Gastrocnemius medialis (tissue), 4 donors: ENCODE measurements at regions of chr9 and their contacts with region 1.

Region 1: DNA sequence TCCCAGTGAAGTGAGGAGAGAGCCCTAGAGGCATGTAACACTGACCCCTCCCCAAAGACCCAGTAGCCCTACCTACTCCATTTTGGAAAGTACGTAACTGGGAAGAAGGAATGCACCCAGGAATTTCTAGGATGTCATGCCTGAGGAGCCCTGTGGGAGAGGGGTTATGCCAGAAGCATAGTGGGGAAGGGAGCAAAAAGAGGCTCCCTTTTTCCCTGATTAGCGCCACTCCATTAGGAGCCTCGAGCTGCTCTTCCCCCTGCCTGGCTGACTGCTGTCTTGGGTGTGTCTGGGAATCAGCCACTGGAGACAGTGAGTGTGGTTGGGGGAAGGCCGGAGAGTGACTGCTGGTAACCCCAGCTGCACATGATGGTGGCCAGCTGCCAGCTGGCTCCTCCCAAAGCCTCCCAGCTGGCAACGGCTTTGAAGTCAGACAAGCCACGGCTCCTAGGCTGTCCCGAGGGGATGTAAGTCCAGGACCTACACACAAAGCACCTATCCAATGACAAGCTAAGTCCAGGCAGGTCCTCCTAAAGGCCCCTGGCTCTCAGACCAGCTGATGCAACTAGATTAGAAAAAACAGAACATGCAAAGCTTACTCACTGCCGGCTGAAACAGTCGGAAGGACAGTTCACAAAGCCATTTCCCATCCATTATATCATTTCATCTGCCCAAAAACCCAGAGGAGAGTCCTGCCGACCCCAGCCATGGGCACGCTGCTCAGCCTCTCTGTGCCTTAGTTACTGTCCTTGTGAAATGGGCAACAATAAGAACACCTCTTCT is 136.6 kb upstream of the ABCA1 start:
- DNase-seq: peak; percentile 94 to 98
- ATAC-seq: peak; percentile 95
- H3K4me3 ChIP-seq: peak overlapping the region in 3 of 4 donors; percentile 17 to 33 (median 17)
- H3K27ac ChIP-seq: peak overlapping the region; percentile 84 to 92 (median 87)
- H3K4me1 ChIP-seq: peaks cover 21 to 24% of the 10 kb centered on the region in 2 donors
- H3K27me3 ChIP-seq: no peaks in the 10 kb centered on the region
- CTCF ChIP-seq: peak in 2 of 5 experiments; percentile 14 to 22
- POLR2A ChIP-seq: peak; percentile 47 to 74

Region 2: GRCh38 chr9:104863180-104863883 is 201.2 kb before region 1 on chr9:
- in situ Hi-C with region 1: loop called in 1 of 4 experiments (anchors 10 kb)
- intact Hi-C with region 1: loop called (anchors 2 kb)
- DNase-seq: peak in 1 of 2 donors; percentile 57
- ATAC-seq: peak; percentile 73 to 79
- H3K4me3 ChIP-seq: no peak overlapping the region
- H3K27ac ChIP-seq: peak overlapping the region; percentile 46 to 90 (median 62)
- H3K4me1 ChIP-seq: peaks cover 24 to 35% of the 10 kb centered on the region in 2 donors
- H3K27me3 ChIP-seq: no peaks in the 10 kb centered on the region
- CTCF ChIP-seq: peak; percentile 56 to 78 (median 74)
- POLR2A ChIP-seq: no peak

Region 3: GRCh38 chr9:104968025-104968982 is 96.2 kb before region 1 on chr9:
- in situ Hi-C with region 1: no loop called
- intact Hi-C with region 1: loop called (anchors 2 kb)
- DNase-seq: peak; percentile 77 to 94
- ATAC-seq: peak; percentile 91 to 93
- H3K4me3 ChIP-seq: peak overlapping the region; percentile 80 to 97 (median 82)
- H3K27ac ChIP-seq: peak overlapping the region; percentile 94 to 99 (median 96)
- H3K4me1 ChIP-seq: peaks cover 21 to 25% of the 10 kb centered on the region in 2 donors
- H3K27me3 ChIP-seq: no peaks in the 10 kb centered on the region
- CTCF ChIP-seq: peak in 1 of 5 experiments; percentile 25
- POLR2A ChIP-seq: peak in 1 of 2 donors; percentile 54

Region 4: DNA sequence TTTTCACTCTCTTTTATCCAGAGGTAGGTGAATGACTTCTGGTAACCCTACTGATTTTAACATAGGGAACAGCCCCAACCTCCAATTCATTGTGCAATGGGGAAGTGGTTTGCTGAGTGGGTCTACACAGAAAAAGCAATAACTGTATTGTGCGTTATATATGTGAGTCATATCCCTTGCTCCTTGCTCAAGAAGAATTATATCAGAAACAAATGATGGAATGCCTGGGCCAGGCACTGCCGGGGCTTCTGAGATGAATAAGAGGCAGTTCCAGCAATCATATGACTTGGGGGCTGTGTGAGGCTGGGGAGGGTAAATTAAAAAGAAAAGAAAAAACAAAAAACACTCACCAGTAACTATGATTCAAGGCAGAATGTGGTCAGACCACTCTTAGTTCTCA is 57.4 kb before region 1 on chr9:
- in situ Hi-C with region 1: no loop called
- intact Hi-C with region 1: no loop called
- DNase-seq: no peak
- ATAC-seq: peak in 1 of 2 donors; percentile 49
- H3K4me3 ChIP-seq: no peak overlapping the region
- H3K27ac ChIP-seq: no peak overlapping the region
- H3K4me1 ChIP-seq: no peaks in the 10 kb centered on the region
- H3K27me3 ChIP-seq: no peaks in the 10 kb centered on the region
- CTCF ChIP-seq: no peak
- POLR2A ChIP-seq: no peak

Region 5: DNA sequence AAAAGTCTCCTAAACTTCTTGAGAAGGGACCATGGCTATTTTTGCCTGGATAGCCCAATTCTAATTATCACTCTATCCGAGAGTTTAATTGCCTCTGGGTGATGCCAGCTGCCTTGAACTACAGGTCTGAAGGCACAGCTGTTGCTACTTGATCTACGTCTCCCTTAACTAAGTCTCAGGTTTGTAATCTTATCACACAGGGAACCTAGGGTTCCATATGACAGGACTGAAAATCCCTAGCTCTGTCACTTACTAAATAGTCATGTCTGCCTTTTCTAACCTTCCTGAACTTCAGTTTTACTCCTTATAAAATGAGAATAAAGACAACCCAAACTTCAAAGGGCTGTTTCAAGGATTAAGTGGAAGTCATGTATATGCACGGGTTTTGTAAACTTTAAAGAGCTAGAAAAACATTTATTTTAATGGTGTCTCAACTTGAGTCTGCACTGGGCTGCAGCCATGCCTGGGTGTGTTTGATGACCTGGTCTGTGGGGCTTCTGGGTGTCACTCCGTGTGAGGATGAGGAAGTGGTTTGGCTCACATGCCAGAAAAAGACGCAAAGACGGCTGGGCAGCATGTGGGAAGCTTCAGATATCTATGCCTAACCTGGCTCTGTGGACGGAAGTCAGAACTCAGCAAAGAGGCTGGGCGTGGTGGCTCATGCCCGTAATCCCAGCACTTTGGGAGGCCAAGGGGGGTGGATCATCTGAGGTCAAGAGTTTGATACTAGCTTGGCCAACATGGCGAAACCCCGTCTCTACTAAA is 50.6 kb after region 1 on chr9:
- in situ Hi-C with region 1: no loop called
- intact Hi-C with region 1: loop called (anchors 1 kb)
- DNase-seq: peak; percentile 30 to 58
- ATAC-seq: peak; percentile 22 to 51
- H3K4me3 ChIP-seq: no peak overlapping the region
- H3K27ac ChIP-seq: peak overlapping the region; percentile 73 to 82 (median 80)
- H3K4me1 ChIP-seq: peaks cover 19 to 36% of the 10 kb centered on the region in 2 donors
- H3K27me3 ChIP-seq: no peaks in the 10 kb centered on the region
- CTCF ChIP-seq: no peak
- POLR2A ChIP-seq: peak in 1 of 2 donors; percentile 51

Region 6: DNA sequence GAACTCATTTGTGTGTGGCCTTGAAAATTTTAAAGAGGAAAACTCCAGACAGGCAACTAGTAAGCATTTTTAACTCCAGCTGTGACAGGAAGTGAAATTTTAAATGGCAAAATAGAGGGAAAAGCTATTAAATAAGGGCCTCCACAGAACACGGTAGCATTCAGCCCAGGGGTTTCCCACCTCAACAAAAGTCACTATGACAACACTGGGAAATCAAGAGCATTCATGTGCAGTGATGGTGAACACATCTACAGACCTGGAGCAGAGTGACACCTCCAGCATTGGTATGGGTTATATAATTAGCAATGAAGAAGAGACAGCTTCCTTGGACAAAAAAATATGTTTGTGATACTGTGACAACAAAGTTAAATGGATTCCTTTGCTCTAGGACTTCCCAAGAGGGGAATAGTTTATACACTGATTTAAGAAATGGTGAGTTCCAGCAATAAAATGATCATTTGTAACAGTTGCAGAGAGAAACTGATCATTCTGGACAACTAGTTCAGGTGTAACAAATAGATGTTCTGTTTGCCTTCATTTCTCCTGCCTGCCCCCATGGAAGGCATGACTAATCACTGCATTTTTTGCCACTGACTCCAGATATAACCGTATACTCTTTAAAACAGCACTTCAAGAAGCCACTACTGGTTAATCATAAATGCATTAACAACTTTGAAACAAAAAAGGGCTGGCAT is 86.6 kb after region 1 on chr9:
- in situ Hi-C with region 1: no loop called
- intact Hi-C with region 1: loop called (anchors 5 kb)
- DNase-seq: no peak
- ATAC-seq: no peak
- H3K4me3 ChIP-seq: no peak overlapping the region
- H3K27ac ChIP-seq: no peak overlapping the region
- H3K4me1 ChIP-seq: no peaks in the 10 kb centered on the region
- H3K27me3 ChIP-seq: no peaks in the 10 kb centered on the region
- CTCF ChIP-seq: no peak
- POLR2A ChIP-seq: no peak

Region 7: GRCh38 chr9:105244003-105244733 is 179.7 kb after region 1 on chr9 and contains the start of gene SLC44A1:
- in situ Hi-C with region 1: no loop called
- intact Hi-C with region 1: loop called (anchors 5 kb)
- DNase-seq: peak; percentile 91 to 95
- ATAC-seq: peak; percentile 89 to 90
- H3K4me3 ChIP-seq: peak within 1 kb of the TSS; percentile 76 to 96 (median 84)
- H3K27ac ChIP-seq: peak within 1 kb of the TSS; percentile 71 to 82 (median 74)
- H3K4me1 ChIP-seq: peaks cover 10 to 16% of the 10 kb centered on the region in 2 donors
- H3K27me3 ChIP-seq: no peaks in the 10 kb centered on the region
- CTCF ChIP-seq: peak in 1 of 5 experiments; percentile 9
- POLR2A ChIP-seq: peak; percentile 85 to 88
- total RNA-seq, gene SLC44A1: 5.4 to 15.9 (median 11.3) TPM